Activated CD4-positive, alpha-beta memory T cell treated with anti-CD3 and anti-CD28 coated beads for 36 hours (primary cell): ENCODE measurements at regions of chr2 and their contacts with region 1.

Region 1: DNA sequence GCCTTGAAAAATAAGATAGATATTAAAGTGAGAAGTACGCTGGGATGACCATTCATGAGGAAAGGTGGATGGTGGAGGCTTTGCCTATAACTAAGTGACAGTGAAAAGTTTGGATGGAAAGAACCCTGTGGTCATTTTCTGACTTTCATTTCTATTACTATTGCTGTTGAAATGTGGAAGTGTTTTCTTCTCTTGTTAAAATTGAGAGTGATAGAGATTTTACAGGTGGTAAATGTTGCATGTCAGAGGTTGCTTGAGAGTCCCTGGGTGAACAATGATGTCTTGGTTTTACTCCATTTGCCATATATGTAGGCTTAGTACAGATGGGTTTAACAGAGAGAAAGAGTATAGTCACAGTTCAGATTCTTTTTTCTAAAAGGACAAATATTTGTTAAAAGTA is 18.4 kb downstream of the NCOA1 start:
- DNase-seq: no peak
- H3K4me3 Mint-ChIP-seq: no peak overlapping the region
- H3K27ac Mint-ChIP-seq: no peak overlapping the region
- H3K4me1 Mint-ChIP-seq: peaks cover 70% of the 10 kb centered on the region
- H3K27me3 Mint-ChIP-seq: no peaks in the 10 kb centered on the region

Region 2: GRCh38 chr2:24454294-24454693 is 55.1 kb before region 1 on chr2:
- CTCF ChIA-PET with region 1: no interaction called
- POLR2A ChIA-PET with region 1: no interaction called
- intact Hi-C with region 1: loop called (anchors 5 kb)
- DNase-seq: no peak
- H3K4me3 Mint-ChIP-seq: no peak overlapping the region
- H3K27ac Mint-ChIP-seq: no peak overlapping the region
- H3K4me1 Mint-ChIP-seq: peaks cover 9% of the 10 kb centered on the region
- H3K27me3 Mint-ChIP-seq: peaks cover 2% of the 10 kb centered on the region

Region 3: DNA sequence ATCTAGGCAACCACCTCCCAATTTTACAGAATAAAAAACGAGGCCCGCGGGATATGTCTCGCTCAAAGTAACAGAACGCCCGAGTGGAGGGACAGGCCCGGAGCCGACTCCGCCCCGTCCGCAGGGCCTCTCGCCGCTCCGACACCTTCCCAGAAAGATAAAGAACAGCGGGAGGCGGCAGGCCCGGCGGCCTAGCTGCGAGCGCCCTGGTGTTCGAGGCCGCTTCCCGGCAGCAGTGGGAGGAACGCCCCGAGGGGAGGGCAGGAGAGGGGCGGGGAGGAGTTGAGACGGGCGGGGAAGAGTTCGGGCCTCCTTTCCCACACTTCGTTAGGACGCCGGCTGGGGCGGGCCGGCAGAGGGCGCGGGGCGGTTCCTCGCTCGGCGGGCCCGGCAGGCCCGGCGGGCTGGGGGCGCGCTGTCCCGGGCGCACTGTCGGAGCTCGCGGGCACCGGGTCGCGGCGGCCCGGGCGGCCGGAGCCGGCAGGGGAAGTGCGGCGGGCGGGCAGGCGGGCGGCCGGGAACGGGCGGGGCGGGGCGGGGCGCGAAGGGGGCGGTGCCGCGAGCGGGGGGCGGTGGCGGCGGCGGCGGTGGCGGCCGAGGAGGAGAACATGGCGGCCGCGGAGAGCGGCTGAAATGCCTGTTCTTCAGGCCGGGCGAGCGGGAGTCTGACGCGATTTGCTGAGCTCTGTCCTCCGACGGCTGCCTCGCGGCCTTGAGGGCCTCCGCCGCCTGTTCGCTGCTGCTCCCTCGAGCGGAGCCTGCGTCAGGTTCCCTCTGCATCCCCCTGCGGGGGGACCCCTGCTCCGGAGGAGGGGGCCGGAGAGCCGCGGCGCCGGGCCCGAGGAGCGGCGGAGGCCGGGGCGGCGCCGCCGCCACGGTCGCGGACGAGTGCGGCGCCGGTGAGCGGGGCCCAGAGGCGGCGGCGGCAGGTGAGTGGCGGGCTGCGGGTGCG is 18.5 kb before region 1 on chr2 and contains the start of gene NCOA1:
- CTCF ChIA-PET with region 1: interaction called, 3 read pairs
- POLR2A ChIA-PET with region 1: interaction called, 3 read pairs
- intact Hi-C with region 1: loop called (anchors 2 kb)
- DNase-seq: peak; percentile 95
- H3K4me3 Mint-ChIP-seq: peak within 1 kb of the TSS; percentile 83
- H3K27ac Mint-ChIP-seq: peak within 1 kb of the TSS; percentile 91
- H3K4me1 Mint-ChIP-seq: peaks cover 48% of the 10 kb centered on the region
- H3K27me3 Mint-ChIP-seq: no peaks in the 10 kb centered on the region
- total RNA-seq, gene NCOA1: 21.3 to 24.0 TPM

Region 4: DNA sequence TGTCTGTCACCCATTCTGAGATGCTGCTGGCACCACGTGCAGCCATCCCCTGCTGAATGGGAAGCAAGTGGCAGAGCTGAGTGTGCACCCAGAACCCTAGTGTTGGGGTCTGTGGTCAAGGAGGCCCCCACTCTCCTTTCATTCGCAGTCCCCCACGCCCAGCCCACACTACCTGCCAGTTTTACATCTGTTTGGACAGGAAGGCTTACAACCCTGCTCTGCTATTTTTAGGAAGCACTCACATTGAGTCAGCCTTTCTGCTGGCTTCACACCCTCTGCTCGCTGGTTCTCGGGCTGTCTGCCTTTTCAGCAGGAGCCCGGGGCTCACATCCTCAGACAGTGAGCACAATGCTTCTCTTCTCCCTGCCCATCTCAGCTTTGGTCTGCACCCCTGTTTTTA is 421.3 kb after region 1 on chr2:
- CTCF ChIA-PET with region 1: no interaction called
- POLR2A ChIA-PET with region 1: no interaction called
- intact Hi-C with region 1: no loop called
- DNase-seq: peak; percentile 31
- H3K4me3 Mint-ChIP-seq: no peak overlapping the region
- H3K27ac Mint-ChIP-seq: no peak overlapping the region
- H3K4me1 Mint-ChIP-seq: peaks cover 6% of the 10 kb centered on the region
- H3K27me3 Mint-ChIP-seq: no peaks in the 10 kb centered on the region